ENCODE measurements at regions of chr1 and their contacts with region 1.

Region 1: DNA sequence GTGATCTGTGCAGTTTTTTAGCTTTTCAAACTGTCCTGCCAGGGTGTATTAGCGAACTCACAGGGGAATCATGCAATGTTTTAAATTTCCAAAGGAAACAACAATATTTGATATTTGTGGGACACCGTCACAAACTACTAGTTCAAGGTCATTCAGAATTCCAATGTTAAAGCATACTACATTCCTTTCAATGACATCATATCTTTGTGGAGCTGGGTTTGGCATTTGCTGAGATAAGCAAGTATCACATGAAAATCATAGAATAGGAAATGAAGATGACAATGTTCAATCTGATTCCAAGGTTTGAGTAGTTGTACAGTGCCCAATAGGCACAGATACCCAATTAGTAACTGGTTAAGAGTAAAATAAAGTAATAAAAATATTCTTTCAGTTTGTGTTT is 35.6 kb downstream of the NUF2 start:
- DNase-seq: no peak

Region 2: DNA sequence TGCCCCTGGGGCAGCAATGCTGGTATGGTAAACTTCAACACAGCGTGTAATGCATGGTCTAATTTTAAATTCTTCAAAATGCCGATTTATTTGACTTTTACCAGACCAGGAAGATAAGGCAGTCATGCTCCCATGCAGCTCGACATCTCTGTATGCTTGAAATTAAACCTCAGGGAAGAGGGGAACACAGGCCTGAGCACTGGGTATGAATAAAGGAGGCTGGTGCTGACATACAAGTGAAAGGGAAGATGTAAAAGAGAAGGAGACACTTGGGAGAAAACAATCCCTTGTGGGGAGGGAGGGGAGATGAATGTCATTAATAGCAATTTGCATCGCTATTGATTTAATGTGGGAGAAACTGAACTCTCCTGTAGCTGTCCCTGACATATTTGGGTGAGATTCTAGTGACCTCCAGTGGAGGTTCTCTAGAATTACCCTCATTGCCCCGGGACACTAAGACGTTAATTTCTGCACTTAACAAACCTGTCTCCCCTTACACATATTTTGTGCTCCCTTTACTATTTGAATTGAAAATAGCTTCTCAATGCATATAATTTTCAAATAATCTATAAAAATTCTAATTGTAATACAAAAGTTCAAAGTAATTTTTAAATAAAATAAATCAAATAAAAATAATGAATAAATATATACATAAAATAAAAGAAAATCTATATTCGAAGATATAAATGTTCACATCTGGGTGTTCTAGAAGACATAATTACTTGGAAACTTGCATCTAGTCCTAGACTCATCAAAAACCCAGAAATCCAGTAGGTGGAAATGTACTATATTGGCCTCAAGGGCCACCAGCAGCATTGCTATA is 1716.0 kb after region 1 on chr1:
- intact Hi-C with region 1: loop called (anchors 10 kb)
- DNase-seq: peak in 18 of 42 donors; percentile 23 to 76 (median 48)

Measured in head of caudate nucleus (tissue), 42 donors.